ENCODE measurements at regions of chr12 and their contacts with region 1.

Region 1: GRCh38 chr12:14995583-14996425 is 23.0 kb downstream of the PDE6H start:
- DNase-seq: peak in 2 of 35 experiments; percentile 28 to 83
- ATAC-seq: peak in 3 of 4 experiments; percentile 36 to 70 (median 37)
- H3K4me3 ChIP-seq: no peak overlapping the region
- H3K4me3 Mint-ChIP-seq: peak overlapping the region in 2 of 3 donors; percentile 28 to 46
- H3K27ac ChIP-seq: no peak overlapping the region
- H3K27ac Mint-ChIP-seq: peak overlapping the region; percentile 89 to 91
- H3K4me1 ChIP-seq: peaks cover 15 to 18% of the 10 kb centered on the region in 2 experiments
- H3K4me1 Mint-ChIP-seq: peaks cover 27 to 31% (median 31%) of the 10 kb centered on the region in 3 donors
- H3K27me3 ChIP-seq: no peaks in the 10 kb centered on the region
- H3K27me3 Mint-ChIP-seq: peaks cover 5 to 6% of the 10 kb centered on the region in 2 donors

Region 2: GRCh38 chr12:14803011-14803829 is 192.6 kb before region 1 on chr12 and contains the starts of genes C12orf60 and WBP11:
- CTCF ChIA-PET with region 1: interaction called in 1 of 2 experiments, 11 read pairs
- POLR2A ChIA-PET with region 1: interaction called in 1 of 2 experiments, 3 read pairs
- DNase-seq: peak; percentile 62 to 96 (median 87)
- ATAC-seq: peak; percentile 95 to 99 (median 96)
- H3K4me3 ChIP-seq: peak within 1 kb of the TSS; percentile 72 to 90
- H3K4me3 Mint-ChIP-seq: no peak within 1 kb of the TSS
- H3K27ac ChIP-seq: peak within 1 kb of the TSS; percentile 93
- H3K27ac Mint-ChIP-seq: no peak within 1 kb of the TSS
- H3K4me1 ChIP-seq: peaks cover 7 to 18% of the 10 kb centered on the region in 2 experiments
- H3K4me1 Mint-ChIP-seq: peaks cover 0 to 24% (median 17%) of the 10 kb centered on the region in 3 donors
- H3K27me3 ChIP-seq: no peaks in the 10 kb centered on the region
- H3K27me3 Mint-ChIP-seq: no peaks in the 10 kb centered on the region
- total RNA-seq, gene C12orf60: 0.50 to 1.4 (median 0.93) TPM in 4 of 5 donors, not detected in the other
- total RNA-seq, gene WBP11: 72.6 to 122 (median 80.6) TPM

Region 3: GRCh38 chr12:14850929-14851663 is 144.7 kb before region 1 on chr12:
- CTCF ChIA-PET with region 1: interaction called, 9 to 40 read pairs
- POLR2A ChIA-PET with region 1: interaction called in 1 of 2 experiments, 5 read pairs
- DNase-seq: no peak
- ATAC-seq: no peak
- H3K4me3 ChIP-seq: no peak overlapping the region
- H3K4me3 Mint-ChIP-seq: no peak overlapping the region
- H3K27ac ChIP-seq: no peak overlapping the region
- H3K27ac Mint-ChIP-seq: no peak overlapping the region
- H3K4me1 ChIP-seq: peaks cover 0 to 2% of the 10 kb centered on the region in 2 experiments
- H3K4me1 Mint-ChIP-seq: peaks cover 2 to 5% (median 5%) of the 10 kb centered on the region in 3 donors
- H3K27me3 ChIP-seq: no peaks in the 10 kb centered on the region
- H3K27me3 Mint-ChIP-seq: no peaks in the 10 kb centered on the region

Region 4: GRCh38 chr12:14937689-14938088 is 58.1 kb before region 1 on chr12:
- CTCF ChIA-PET with region 1: interaction called, 17 to 23 read pairs
- POLR2A ChIA-PET with region 1: interaction called in 1 of 2 experiments, 4 read pairs
- DNase-seq: peak in 3 of 35 experiments; percentile 35 to 59 (median 37)
- ATAC-seq: peak in 3 of 4 experiments; percentile 25 to 41 (median 39)
- H3K4me3 ChIP-seq: no peak overlapping the region
- H3K4me3 Mint-ChIP-seq: peak overlapping the region in 1 of 3 donors; percentile 22
- H3K27ac ChIP-seq: peak overlapping the region; percentile 46
- H3K27ac Mint-ChIP-seq: peak overlapping the region; percentile 93 to 94
- H3K4me1 ChIP-seq: peaks cover 0 to 14% of the 10 kb centered on the region in 2 experiments
- H3K4me1 Mint-ChIP-seq: peaks cover 60 to 66% (median 63%) of the 10 kb centered on the region in 3 donors
- H3K27me3 ChIP-seq: no peaks in the 10 kb centered on the region
- H3K27me3 Mint-ChIP-seq: no peaks in the 10 kb centered on the region

Region 5: GRCh38 chr12:14960548-14961465 is 35.0 kb before region 1 on chr12:
- CTCF ChIA-PET with region 1: interaction called in 1 of 2 experiments, 18 read pairs
- POLR2A ChIA-PET with region 1: interaction called in 1 of 2 experiments, 3 read pairs
- DNase-seq: peak in 34 of 35 experiments; percentile 26 to 75 (median 54)
- ATAC-seq: peak; percentile 51 to 62 (median 61)
- H3K4me3 ChIP-seq: peak overlapping the region; percentile 77 to 88
- H3K4me3 Mint-ChIP-seq: peak overlapping the region; percentile 97 to 98 (median 98)
- H3K27ac ChIP-seq: peak overlapping the region; percentile 97
- H3K27ac Mint-ChIP-seq: peak overlapping the region; percentile 95 to 98
- H3K4me1 ChIP-seq: peaks cover 41 to 49% of the 10 kb centered on the region in 2 experiments
- H3K4me1 Mint-ChIP-seq: peaks cover 66 to 77% (median 71%) of the 10 kb centered on the region in 3 donors
- H3K27me3 ChIP-seq: no peaks in the 10 kb centered on the region
- H3K27me3 Mint-ChIP-seq: no peaks in the 10 kb centered on the region

Region 6: DNA sequence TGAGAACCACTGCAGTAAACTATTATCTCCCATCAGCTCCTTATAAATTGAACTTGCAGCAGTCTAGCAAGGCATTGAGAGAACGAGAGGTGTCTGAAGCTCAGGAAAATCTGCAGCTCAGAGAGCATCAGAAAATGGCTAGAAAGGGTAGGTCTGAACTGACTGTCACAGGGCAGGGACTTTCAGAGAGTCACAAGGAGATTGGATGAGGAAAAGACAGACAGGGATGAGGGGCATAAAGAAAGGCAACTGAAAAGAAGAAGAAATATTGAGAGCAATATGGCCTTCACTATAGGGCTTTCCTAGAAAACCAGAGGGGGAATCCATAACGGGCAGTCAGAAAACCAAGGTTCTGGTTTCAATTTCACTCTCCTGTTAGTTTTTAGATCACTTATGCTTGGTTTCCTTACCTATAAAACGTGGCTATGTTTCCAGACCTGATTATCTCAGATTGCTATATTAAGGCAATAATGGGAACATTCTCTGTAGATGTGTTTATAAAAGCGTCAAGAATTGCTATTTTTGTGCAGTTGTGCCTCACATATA is 17.9 kb after region 1 on chr12:
- CTCF ChIA-PET with region 1: no interaction called
- POLR2A ChIA-PET with region 1: no interaction called
- DNase-seq: no peak
- ATAC-seq: no peak
- H3K4me3 ChIP-seq: no peak overlapping the region
- H3K4me3 Mint-ChIP-seq: no peak overlapping the region
- H3K27ac ChIP-seq: no peak overlapping the region
- H3K27ac Mint-ChIP-seq: no peak overlapping the region
- H3K4me1 ChIP-seq: no peaks in the 10 kb centered on the region
- H3K4me1 Mint-ChIP-seq: no peaks in the 10 kb centered on the region
- H3K27me3 ChIP-seq: no peaks in the 10 kb centered on the region
- H3K27me3 Mint-ChIP-seq: peaks cover 6 to 14% of the 10 kb centered on the region in 2 donors

Region 7: GRCh38 chr12:15230751-15231150 is 234.9 kb after region 1 on chr12:
- CTCF ChIA-PET with region 1: no interaction called
- POLR2A ChIA-PET with region 1: no interaction called
- DNase-seq: no peak
- ATAC-seq: no peak
- H3K4me3 ChIP-seq: no peak overlapping the region
- H3K4me3 Mint-ChIP-seq: no peak overlapping the region
- H3K27ac ChIP-seq: no peak overlapping the region
- H3K27ac Mint-ChIP-seq: no peak overlapping the region
- H3K4me1 ChIP-seq: no peaks in the 10 kb centered on the region
- H3K4me1 Mint-ChIP-seq: no peaks in the 10 kb centered on the region
- H3K27me3 ChIP-seq: peaks cover 0 to under 1% of the 10 kb centered on the region in 2 experiments
- H3K27me3 Mint-ChIP-seq: peaks cover 20 to 23% of the 10 kb centered on the region in 2 donors

Measured in T-cell (primary cell).